ENCODE measurements at regions of chr1 and their contacts with region 1.

Region 1: GRCh38 chr1:115112496-115113375 is 23.4 kb upstream of the TSPAN2 start:
- DNase-seq: peak; percentile 53
- H3K4me3 ChIP-seq: no peak overlapping the region; a peak in 1 of 4 replicates
- H3K27ac ChIP-seq: no peak overlapping the region; a peak in 1 of 4 replicates
- H3K4me1 ChIP-seq: peaks cover 7 to 9% of the 10 kb centered on the region in 2 experiments; a peak in 1 of 4 replicates
- H3K27me3 ChIP-seq: no peaks in the 10 kb centered on the region
- CTCF ChIP-seq: peak; percentile 97
- EP300 ChIP-seq: no peak
- RAD21 ChIP-seq: peak; percentile 89

Region 2: GRCh38 chr1:114979278-114979891 is 133.4 kb before region 1 on chr1:
- CTCF ChIA-PET with region 1: interaction called, 53 read pairs
- POLR2A ChIA-PET with region 1: no interaction called
- DNase-seq: peak; percentile 15
- H3K4me3 ChIP-seq: no peak overlapping the region
- H3K27ac ChIP-seq: no peak overlapping the region
- H3K4me1 ChIP-seq: no peaks in the 10 kb centered on the region
- H3K27me3 ChIP-seq: no peaks in the 10 kb centered on the region
- CTCF ChIP-seq: peak; percentile 84
- EP300 ChIP-seq: no peak
- RAD21 ChIP-seq: peak; percentile 83

Region 3: DNA sequence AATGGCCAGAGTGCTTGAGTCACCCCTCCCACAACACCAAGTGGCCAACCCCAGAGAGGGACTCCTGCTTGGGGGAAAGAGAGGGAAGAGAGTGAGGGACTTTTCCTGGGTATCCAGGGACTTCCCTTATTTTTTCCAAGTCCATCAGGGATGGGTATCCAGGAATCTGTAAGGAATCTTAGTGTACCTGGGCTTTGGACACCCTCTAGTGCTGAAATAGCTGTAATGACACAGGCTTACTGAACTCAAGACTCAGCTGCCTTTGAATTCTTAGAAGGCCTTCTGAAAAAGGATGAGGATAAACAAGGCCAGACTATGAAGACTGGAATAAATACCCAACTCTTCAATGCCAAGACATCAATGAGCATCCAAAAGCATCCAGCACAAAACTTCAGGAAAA is 71.1 kb before region 1 on chr1:
- CTCF ChIA-PET with region 1: interaction called, 13 read pairs
- POLR2A ChIA-PET with region 1: no interaction called
- DNase-seq: no peak
- H3K4me3 ChIP-seq: no peak overlapping the region
- H3K27ac ChIP-seq: no peak overlapping the region
- H3K4me1 ChIP-seq: no peaks in the 10 kb centered on the region
- H3K27me3 ChIP-seq: no peaks in the 10 kb centered on the region
- CTCF ChIP-seq: peak; percentile 39; the same call in 1 of the 2 replicates
- EP300 ChIP-seq: no peak
- RAD21 ChIP-seq: peak; percentile 56

Region 4: DNA sequence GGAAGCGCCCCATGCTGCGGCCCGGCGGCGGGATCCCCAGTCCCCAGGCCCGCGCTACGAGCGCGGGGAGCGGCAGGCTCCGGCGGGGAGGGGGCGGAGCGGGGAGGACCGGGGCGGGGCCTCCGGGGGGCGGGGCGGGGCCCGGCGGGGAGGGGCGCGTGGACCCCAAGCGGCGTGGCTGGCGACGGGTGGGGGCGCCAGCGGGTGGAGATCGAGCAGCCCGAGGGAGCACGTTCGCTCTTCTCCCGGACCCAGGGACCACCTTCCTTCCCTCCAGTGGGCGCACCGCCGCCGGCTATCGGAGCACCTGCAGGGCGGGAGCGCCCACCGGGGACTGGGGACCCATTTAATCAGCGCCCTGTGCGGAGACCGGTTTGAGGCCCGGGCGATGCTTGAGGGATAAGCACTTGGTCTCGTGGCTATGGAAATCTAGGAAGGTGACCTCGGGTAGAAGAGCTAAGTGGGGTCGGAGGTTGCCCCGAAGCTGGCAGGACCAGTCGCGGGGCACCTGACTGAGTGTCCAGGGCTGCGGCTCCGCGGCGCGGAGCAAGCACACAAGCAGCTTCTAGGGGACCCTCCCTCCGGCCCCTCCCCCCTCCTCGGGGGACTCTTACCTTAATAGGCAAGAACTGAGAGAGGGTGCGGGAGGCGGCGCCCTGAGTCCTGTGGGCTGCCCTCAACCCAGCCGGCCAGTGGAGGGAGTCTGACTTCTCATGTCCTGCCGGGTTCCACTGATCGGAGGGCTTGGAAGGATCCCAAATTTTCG is 23.1 kb before region 1 on chr1 and contains the start of gene TSPAN2:
- CTCF ChIA-PET with region 1: interaction called, 46 read pairs
- POLR2A ChIA-PET with region 1: no interaction called
- DNase-seq: peak; percentile 93
- H3K4me3 ChIP-seq: peak within 1 kb of the TSS; percentile 63
- H3K27ac ChIP-seq: no peak within 1 kb of the TSS; a peak in 1 of 4 replicates
- H3K4me1 ChIP-seq: peaks cover 7 to 24% of the 10 kb centered on the region in 2 experiments; a peak in 3 of 4 replicates
- H3K27me3 ChIP-seq: no peaks in the 10 kb centered on the region
- CTCF ChIP-seq: peak; percentile 35
- EP300 ChIP-seq: no peak
- RAD21 ChIP-seq: no peak; the same call in 1 of the 2 replicates
- polyA plus RNA-seq, gene TSPAN2: 0.21 and 0.23 TPM in 2 replicates

Region 5: DNA sequence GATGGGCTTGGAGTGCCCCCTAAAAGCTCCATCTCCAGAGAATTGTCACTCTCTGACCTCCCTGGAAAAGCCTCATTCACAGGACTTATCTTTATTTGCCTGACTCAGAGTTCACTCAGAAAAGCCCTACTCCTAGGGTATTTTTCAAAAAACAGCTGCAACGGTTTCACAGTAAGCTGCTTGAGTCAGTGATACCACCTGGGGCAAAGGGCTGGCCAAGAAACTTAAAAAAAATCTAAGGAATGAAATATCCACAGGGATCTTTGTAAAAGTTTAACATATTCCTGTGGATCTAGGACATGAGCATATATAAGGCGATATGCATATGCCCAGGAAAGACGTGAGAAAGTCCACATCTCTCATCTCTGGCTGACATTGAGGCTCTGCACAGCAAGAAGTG is 10.4 kb after region 1 on chr1:
- CTCF ChIA-PET with region 1: interaction called, 29 read pairs
- POLR2A ChIA-PET with region 1: no interaction called
- DNase-seq: no peak
- H3K4me3 ChIP-seq: no peak overlapping the region
- H3K27ac ChIP-seq: no peak overlapping the region
- H3K4me1 ChIP-seq: no peaks in the 10 kb centered on the region
- H3K27me3 ChIP-seq: no peaks in the 10 kb centered on the region
- CTCF ChIP-seq: no peak
- EP300 ChIP-seq: no peak
- RAD21 ChIP-seq: no peak

Region 6: GRCh38 chr1:115138968-115139367 is 26.2 kb after region 1 on chr1:
- CTCF ChIA-PET with region 1: interaction called, 25 read pairs
- POLR2A ChIA-PET with region 1: no interaction called
- DNase-seq: peak; percentile 87
- H3K4me3 ChIP-seq: no peak overlapping the region; a peak in 1 of 4 replicates
- H3K27ac ChIP-seq: peak overlapping the region; percentile 16 to 60; a peak in 3 of 4 replicates
- H3K4me1 ChIP-seq: peaks cover 5 to 20% of the 10 kb centered on the region in 2 experiments; a peak in 2 of 4 replicates
- H3K27me3 ChIP-seq: no peaks in the 10 kb centered on the region
- CTCF ChIP-seq: peak; percentile 93
- EP300 ChIP-seq: no peak
- RAD21 ChIP-seq: peak; percentile 99

Measured in SK-N-SH (cell line).